ENCODE measurements at regions of chr1 and their contacts with region 1.

Region 1: DNA sequence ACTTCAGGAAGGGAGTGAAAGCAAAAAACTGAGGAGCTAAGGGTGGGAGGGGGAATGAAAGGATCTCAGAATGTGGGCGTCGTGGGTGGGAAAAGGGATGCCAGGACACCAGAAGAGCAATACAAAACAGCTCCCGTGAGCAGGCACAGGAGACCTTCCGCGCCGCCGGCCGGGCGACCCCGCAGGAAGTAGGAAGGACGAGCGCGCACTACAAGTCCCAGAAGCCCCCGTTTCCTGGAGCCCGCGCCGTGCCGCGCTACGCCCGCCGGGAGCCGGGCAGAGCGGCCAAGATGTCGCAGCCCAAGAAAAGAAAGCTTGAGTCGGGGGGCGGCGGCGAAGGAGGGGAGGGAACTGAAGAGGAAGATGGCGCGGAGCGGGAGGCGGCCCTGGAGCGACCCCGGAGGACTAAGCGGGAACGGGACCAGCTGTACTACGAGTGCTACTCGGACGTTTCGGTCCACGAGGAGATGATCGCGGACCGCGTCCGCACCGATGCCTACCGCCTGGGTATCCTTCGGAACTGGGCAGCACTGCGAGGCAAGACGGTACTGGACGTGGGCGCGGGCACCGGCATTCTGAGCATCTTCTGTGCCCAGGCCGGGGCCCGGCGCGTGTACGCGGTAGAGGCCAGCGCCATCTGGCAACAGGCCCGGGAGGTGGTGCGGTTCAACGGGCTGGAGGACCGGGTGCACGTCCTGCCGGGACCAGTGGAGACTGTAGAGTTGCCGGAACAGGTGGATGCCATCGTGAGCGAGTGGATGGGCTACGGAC is at the start of gene PRMT6:
- DNase-seq: peak; percentile 94
- H3K4me3 ChIP-seq: peak within 1 kb of the TSS; percentile 78
- H3K27ac ChIP-seq: peak within 1 kb of the TSS; percentile 89
- H3K4me1 ChIP-seq: peaks cover 13% of the 10 kb centered on the region
- H3K27me3 ChIP-seq: no peaks in the 10 kb centered on the region
- CTCF ChIP-seq: no peak
- total RNA-seq, gene PRMT6: 50.4 and 53.0 TPM in 2 replicates

Region 2: DNA sequence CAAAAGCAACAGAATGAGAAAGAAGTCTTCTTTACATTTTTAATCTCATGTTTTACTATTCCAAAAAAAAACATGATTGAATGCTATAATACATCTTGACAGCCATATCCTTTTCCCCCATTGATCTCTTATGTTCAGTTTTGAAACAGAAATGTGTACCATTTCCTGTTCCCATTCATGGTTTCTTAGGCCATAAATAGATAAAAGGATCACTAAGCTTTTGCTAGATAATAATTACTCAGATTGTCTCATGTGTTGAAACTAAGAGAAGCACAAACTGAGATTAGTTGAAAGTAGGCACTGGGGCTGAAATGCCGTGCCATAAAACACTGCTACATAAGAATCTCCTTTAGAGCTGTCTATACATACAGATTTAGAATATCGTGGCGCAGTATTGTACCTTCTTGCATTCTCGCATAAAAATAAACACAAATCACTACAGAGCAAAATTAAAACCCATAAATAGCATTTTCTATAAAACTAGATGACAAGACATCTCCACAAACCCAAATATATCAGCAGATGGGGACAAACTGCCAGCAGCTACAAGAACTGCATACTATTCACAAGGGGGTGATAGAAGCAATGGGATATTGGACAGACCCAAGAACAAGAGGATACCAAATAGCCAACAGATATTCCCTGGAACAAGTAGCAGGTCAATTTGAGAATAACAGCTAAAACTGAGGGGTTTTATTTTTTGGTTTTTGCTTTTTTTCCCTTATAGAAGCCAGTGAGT is 405.4 kb before region 1 on chr1:
- CTCF ChIA-PET with region 1: no interaction called
- POLR2A ChIA-PET with region 1: no interaction called
- intact Hi-C with region 1: loop called (anchors 5 kb)
- DNase-seq: peak; percentile 88
- H3K4me3 ChIP-seq: peak overlapping the region; percentile 12
- H3K27ac ChIP-seq: peak overlapping the region; percentile 53
- H3K4me1 ChIP-seq: peaks cover 34% of the 10 kb centered on the region
- H3K27me3 ChIP-seq: no peaks in the 10 kb centered on the region
- CTCF ChIP-seq: peak; percentile 55; the same call in 1 of the 2 replicates

Measured in A673 (cell line).